ENCODE measurements at regions of chr6 and their contacts with region 1.

Region 1: DNA sequence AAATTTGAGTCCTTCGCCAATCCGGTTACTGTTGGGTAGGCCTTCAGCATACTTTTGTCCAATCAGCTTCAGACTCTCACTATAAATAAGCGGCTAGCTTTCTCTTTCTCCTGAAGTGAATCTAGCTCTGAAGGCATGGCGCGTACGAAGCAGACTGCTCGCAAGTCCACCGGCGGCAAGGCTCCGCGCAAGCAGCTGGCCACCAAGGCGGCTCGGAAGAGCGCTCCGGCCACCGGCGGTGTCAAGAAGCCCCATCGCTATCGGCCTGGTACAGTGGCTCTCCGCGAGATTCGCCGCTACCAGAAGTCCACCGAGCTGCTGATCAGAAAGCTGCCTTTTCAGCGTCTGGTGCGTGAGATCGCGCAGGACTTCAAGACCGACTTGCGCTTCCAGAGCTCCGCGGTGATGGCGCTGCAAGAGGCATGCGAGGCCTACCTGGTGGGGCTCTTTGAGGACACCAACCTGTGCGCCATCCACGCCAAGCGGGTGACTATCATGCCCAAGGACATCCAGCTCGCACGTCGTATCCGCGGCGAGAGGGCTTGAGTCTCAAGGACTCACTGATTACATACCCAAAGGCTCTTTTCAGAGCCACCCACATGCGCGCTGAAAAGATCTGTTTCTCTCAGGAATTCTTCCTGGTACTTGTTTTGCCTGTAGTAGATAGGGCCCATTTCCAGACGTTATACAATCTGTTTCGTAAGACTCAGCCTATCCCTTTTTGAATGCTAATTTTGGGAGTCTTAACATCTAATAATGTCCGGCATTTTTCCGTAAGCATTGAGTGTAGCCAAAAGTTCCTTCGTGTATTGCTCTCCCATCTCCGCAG is 102.0 kb downstream of the OR2B2 start:
- DNase-seq: peak; percentile 89
- H3K4me3 Mint-ChIP-seq: peak overlapping the region; percentile 86
- H3K27ac Mint-ChIP-seq: peak overlapping the region; percentile 99
- H3K4me1 Mint-ChIP-seq: peaks cover 65% of the 10 kb centered on the region
- H3K27me3 Mint-ChIP-seq: no peaks in the 10 kb centered on the region

Region 2: DNA sequence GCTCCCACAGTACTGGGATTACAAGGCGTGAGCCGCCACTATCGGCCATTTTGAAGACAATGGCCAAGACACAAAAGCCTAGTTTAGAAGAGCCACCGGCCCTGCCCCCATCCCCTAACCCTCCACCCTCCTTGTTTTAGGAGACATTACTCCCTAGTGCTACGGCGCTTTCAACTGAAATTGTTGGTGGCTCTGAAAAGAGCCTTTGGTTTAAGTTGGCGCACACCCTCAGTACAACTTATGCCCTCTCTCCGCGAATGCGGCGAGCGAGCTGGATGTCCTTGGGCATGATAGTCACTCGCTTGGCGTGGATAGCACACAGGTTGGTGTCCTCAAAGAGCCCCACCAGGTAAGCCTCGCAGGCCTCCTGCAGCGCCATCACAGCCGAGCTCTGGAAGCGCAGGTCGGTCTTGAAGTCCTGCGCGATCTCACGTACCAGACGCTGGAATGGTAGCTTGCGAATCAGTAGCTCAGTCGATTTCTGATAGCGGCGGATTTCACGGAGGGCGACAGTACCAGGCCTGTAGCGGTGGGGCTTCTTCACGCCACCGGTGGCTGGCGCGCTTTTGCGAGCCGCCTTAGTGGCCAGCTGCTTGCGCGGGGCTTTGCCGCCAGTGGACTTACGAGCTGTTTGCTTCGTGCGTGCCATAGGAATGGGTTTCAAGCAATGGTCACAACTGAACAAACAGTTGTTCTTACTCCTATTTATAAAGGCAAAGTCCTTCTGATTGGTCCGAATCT is 1560.0 kb before region 1 on chr6:
- CTCF ChIA-PET with region 1: no interaction called
- POLR2A ChIA-PET with region 1: interaction called, 12 read pairs
- DNase-seq: peak; percentile 82
- H3K4me3 Mint-ChIP-seq: peak overlapping the region; percentile 98
- H3K27ac Mint-ChIP-seq: peak overlapping the region; percentile 100
- H3K4me1 Mint-ChIP-seq: peaks cover 40% of the 10 kb centered on the region
- H3K27me3 Mint-ChIP-seq: no peaks in the 10 kb centered on the region

Region 3: DNA sequence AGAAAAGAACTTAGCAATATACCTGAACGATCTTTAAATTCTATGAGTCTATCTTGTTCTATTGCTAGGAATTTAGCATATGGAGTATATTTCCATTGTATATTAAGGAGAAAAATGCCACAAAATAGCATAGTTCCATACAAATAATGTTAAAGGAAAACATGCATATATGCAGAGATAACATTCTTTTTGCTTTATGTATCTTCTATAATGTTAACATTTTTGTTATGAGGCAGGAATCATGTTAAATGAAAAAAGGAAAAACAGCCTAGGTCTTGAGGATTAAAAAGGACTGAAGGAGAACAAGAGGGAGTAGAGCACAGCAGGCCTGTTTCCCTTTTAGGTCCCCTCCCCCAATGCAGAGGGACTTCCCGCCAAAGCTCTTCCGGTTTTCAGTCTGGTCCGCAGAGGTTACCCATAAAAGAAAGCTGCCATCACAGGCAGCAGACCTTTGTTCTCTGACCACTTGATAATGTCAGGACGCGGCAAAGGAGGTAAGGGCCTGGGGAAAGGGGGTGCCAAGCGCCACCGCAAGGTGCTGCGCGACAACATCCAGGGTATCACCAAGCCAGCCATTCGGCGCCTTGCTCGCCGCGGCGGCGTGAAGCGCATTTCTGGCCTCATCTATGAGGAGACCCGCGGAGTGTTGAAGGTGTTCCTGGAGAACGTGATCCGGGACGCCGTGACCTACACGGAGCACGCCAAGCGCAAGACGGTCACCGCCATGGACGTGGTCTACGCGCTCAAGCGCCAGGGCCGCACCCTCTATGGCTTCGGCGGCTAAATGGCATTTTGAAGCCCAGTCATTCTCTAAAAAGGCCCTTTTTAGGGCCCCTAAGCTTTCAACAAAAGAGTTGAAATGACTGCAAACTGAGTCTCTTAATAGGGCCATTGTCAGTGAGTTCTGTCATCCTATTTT is 671.1 kb before region 1 on chr6:
- CTCF ChIA-PET with region 1: interaction called, 4 read pairs
- POLR2A ChIA-PET with region 1: interaction called, 64 read pairs
- DNase-seq: peak; percentile 82
- H3K4me3 Mint-ChIP-seq: peak overlapping the region; percentile 96
- H3K27ac Mint-ChIP-seq: peak overlapping the region; percentile 99
- H3K4me1 Mint-ChIP-seq: peaks cover 63% of the 10 kb centered on the region
- H3K27me3 Mint-ChIP-seq: no peaks in the 10 kb centered on the region

Region 4: DNA sequence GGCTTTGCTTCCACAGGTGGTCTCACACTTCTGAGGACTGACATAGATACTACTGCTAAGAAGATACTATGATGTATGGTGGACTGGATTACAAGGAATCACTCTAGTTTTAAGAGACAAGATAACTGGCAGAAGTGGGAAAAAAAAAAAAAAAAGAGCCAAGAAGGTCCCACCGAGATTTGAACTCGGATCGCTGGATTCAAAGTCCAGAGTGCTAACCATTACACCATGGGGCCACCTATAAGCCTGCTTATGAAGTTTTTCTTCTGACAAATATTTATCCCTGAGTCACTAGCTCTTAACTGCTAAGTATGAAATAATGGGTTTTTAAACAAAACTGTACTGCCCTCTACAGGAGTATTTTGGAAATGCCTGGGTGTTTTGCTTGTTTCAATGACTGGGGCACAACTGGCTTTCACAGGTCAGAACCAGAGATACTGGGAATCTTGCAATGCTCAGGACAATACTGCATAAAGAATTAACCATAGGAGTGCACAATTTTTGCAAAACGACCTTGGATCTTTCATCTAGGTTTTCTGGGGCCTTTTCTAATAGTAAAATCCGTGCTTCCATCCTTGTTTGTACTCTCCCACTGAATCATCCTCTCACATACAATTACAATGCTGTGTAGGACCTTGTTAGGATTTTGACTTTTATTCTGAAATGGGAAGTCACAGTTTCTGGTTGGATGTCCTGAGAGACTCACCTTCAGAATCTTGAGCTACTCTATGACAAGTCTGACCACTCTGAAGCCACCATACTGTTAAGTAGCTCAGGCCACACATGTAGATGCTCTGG is 14.3 kb before region 1 on chr6:
- CTCF ChIA-PET with region 1: interaction called, 17 read pairs
- POLR2A ChIA-PET with region 1: interaction called, 29 read pairs
- DNase-seq: peak; percentile 82
- H3K4me3 Mint-ChIP-seq: no peak overlapping the region
- H3K27ac Mint-ChIP-seq: no peak overlapping the region
- H3K4me1 Mint-ChIP-seq: peaks cover 47% of the 10 kb centered on the region
- H3K27me3 Mint-ChIP-seq: peaks cover 18% of the 10 kb centered on the region

Region 5: GRCh38 chr6:27838058-27838944 is 28.1 kb after region 1 on chr6:
- CTCF ChIA-PET with region 1: interaction called, 3 read pairs
- POLR2A ChIA-PET with region 1: interaction called, 60 read pairs
- DNase-seq: peak; percentile 92
- H3K4me3 Mint-ChIP-seq: no peak overlapping the region
- H3K27ac Mint-ChIP-seq: no peak overlapping the region
- H3K4me1 Mint-ChIP-seq: peaks cover 31% of the 10 kb centered on the region
- H3K27me3 Mint-ChIP-seq: no peaks in the 10 kb centered on the region

Region 6: GRCh38 chr6:27871924-27872638 is 61.9 kb after region 1 on chr6:
- CTCF ChIA-PET with region 1: interaction called, 4 read pairs
- POLR2A ChIA-PET with region 1: interaction called, 172 read pairs
- DNase-seq: peak; percentile 94
- H3K4me3 Mint-ChIP-seq: peak overlapping the region; percentile 92
- H3K27ac Mint-ChIP-seq: peak overlapping the region; percentile 99
- H3K4me1 Mint-ChIP-seq: peaks cover 65% of the 10 kb centered on the region
- H3K27me3 Mint-ChIP-seq: no peaks in the 10 kb centered on the region

Region 7: GRCh38 chr6:27922949-27923348 is 112.8 kb after region 1 on chr6:
- CTCF ChIA-PET with region 1: no interaction called
- POLR2A ChIA-PET with region 1: no interaction called
- DNase-seq: no peak
- H3K4me3 Mint-ChIP-seq: no peak overlapping the region
- H3K27ac Mint-ChIP-seq: no peak overlapping the region
- H3K4me1 Mint-ChIP-seq: no peaks in the 10 kb centered on the region
- H3K27me3 Mint-ChIP-seq: peaks cover 27% of the 10 kb centered on the region